Caco-2 (cell line): ENCODE measurements at regions of chr3 and their contacts with region 1.

Region 1: DNA sequence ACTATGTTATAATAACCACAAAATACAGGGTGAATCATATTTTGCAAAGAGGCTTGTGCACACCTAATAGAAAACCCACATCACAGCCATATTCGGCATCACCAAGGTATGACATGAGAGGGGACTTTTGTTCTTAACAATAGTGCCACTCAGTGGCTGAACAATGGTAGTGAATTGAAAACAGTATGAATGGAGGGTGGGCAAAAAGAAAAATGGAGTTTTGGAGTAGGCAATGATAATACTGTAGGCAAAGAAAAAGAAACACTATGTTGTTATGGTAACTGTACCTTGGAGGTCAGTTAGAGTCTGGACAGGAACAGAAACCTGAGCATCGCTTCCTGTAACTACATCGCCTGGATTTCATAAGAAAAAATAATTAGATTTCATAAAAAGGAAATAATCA is 348.6 kb downstream of the PLCL2 start:
- DNase-seq: peak in 1 of 2 experiments; percentile 46
- H3K4me3 ChIP-seq: no peak overlapping the region
- H3K4me3 Mint-ChIP-seq: no peak overlapping the region
- H3K27ac Mint-ChIP-seq: no peak overlapping the region
- H3K4me1 ChIP-seq: peaks cover 6% of the 10 kb centered on the region
- H3K4me1 Mint-ChIP-seq: no peaks in the 10 kb centered on the region
- H3K27me3 ChIP-seq: no peaks in the 10 kb centered on the region
- H3K27me3 Mint-ChIP-seq: no peaks in the 10 kb centered on the region
- CTCF ChIP-seq: peak; percentile 59 to 60

Region 2: GRCh38 chr3:16600780-16601539 is 632.4 kb before region 1 on chr3:
- CTCF ChIA-PET with region 1: no interaction called
- POLR2A ChIA-PET with region 1: no interaction called
- intact Hi-C with region 1: loop called (anchors 1 kb)
- DNase-seq: peak; percentile 46 to 57
- H3K4me3 ChIP-seq: no peak overlapping the region
- H3K4me3 Mint-ChIP-seq: no peak overlapping the region
- H3K27ac Mint-ChIP-seq: no peak overlapping the region
- H3K4me1 ChIP-seq: no peaks in the 10 kb centered on the region
- H3K4me1 Mint-ChIP-seq: no peaks in the 10 kb centered on the region
- H3K27me3 ChIP-seq: no peaks in the 10 kb centered on the region
- H3K27me3 Mint-ChIP-seq: peaks cover 12% of the 10 kb centered on the region
- CTCF ChIP-seq: peak; percentile 63 to 84

Region 3: DNA sequence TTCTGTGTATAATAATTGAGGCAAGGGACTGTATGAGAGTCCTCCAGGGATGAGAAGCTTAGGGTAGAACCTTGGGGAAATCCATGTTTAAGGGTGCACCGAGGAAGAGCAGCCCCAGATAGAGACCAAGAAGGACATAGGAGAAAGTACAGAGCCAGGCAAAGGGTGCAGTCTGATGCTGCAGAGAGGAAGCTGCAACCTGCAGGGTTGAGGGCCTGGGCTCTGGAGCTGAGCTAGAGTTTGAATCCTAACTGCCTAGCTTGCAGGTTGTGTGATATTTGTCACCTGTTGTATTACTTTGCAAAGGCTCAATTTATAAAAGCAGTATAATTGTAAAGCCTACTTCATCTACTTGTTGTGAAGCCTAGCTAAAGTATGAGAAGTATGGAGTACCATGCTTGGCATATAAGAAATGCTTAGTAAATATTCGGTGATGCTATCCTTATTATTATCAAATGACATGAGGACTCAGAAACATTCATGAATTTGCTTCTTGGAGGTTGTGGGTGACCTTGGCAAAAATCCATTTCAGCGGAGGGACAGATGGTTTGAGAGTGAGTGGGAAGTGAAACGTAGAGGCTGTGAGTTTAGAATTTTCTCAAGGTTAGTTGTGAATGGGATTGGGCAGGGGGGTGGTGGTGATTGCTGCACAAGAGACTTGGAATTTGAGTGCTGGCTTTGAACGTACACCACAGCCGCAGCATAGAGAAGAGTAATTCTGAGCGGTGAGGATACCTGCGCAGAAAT is 304.8 kb before region 1 on chr3:
- CTCF ChIA-PET with region 1: no interaction called
- POLR2A ChIA-PET with region 1: no interaction called
- intact Hi-C with region 1: loop called (anchors 10 kb)
- DNase-seq: no peak
- H3K4me3 ChIP-seq: no peak overlapping the region
- H3K4me3 Mint-ChIP-seq: no peak overlapping the region
- H3K27ac Mint-ChIP-seq: no peak overlapping the region
- H3K4me1 ChIP-seq: no peaks in the 10 kb centered on the region
- H3K4me1 Mint-ChIP-seq: no peaks in the 10 kb centered on the region
- H3K27me3 ChIP-seq: no peaks in the 10 kb centered on the region; the same call in 1 of the 2 replicates
- H3K27me3 Mint-ChIP-seq: peaks cover 6% of the 10 kb centered on the region
- CTCF ChIP-seq: no peak

Region 4: GRCh38 chr3:17032407-17033034 is 200.9 kb before region 1 on chr3:
- CTCF ChIA-PET with region 1: no interaction called
- POLR2A ChIA-PET with region 1: no interaction called
- intact Hi-C with region 1: loop called (anchors 5 kb)
- DNase-seq: peak in 1 of 2 experiments; percentile 31
- H3K4me3 ChIP-seq: no peak overlapping the region
- H3K4me3 Mint-ChIP-seq: no peak overlapping the region
- H3K27ac Mint-ChIP-seq: no peak overlapping the region
- H3K4me1 ChIP-seq: no peaks in the 10 kb centered on the region
- H3K4me1 Mint-ChIP-seq: no peaks in the 10 kb centered on the region
- H3K27me3 ChIP-seq: no peaks in the 10 kb centered on the region
- H3K27me3 Mint-ChIP-seq: peaks cover 14% of the 10 kb centered on the region
- CTCF ChIP-seq: peak; percentile 46 to 77

Region 5: DNA sequence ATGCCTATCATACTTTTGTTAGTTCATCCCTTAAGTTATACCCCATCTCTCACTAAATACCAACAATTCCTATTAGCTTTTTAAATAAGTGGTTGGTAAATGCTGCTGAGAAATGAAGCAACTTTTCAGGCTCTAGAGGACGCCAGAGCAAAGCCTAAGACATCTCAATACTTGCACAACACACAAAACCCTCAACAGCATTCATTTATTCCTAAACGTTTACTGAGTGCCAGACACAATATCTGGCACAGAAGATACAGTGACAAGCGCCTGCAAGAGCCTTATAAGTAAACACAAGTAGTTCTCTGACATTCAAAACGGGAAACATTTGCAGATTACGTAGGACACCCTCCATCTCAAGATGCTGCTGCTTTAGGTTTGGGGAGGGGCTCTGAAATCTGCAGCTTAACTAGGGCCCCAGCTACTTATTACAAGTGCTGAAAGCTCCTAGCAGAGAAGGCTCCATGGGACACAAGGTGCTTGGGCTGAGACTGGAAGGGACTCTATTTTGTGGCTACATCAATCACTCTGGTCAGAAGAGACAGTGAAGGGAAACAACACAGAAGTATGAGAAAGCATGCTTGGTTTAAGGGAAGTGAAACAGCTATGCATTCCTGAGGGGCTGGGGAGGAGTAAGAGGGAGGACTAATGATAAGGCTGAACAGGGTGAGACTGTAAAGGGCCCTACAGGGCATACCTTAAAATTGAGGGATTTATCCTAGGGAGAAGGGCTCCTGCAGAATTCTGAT is 37.4 kb before region 1 on chr3:
- CTCF ChIA-PET with region 1: no interaction called
- POLR2A ChIA-PET with region 1: no interaction called
- intact Hi-C with region 1: loop called (anchors 1 kb)
- DNase-seq: no peak
- H3K4me3 ChIP-seq: no peak overlapping the region
- H3K4me3 Mint-ChIP-seq: no peak overlapping the region
- H3K27ac Mint-ChIP-seq: no peak overlapping the region
- H3K4me1 ChIP-seq: no peaks in the 10 kb centered on the region
- H3K4me1 Mint-ChIP-seq: no peaks in the 10 kb centered on the region
- H3K27me3 ChIP-seq: no peaks in the 10 kb centered on the region
- H3K27me3 Mint-ChIP-seq: no peaks in the 10 kb centered on the region
- CTCF ChIP-seq: no peak

Region 6: DNA sequence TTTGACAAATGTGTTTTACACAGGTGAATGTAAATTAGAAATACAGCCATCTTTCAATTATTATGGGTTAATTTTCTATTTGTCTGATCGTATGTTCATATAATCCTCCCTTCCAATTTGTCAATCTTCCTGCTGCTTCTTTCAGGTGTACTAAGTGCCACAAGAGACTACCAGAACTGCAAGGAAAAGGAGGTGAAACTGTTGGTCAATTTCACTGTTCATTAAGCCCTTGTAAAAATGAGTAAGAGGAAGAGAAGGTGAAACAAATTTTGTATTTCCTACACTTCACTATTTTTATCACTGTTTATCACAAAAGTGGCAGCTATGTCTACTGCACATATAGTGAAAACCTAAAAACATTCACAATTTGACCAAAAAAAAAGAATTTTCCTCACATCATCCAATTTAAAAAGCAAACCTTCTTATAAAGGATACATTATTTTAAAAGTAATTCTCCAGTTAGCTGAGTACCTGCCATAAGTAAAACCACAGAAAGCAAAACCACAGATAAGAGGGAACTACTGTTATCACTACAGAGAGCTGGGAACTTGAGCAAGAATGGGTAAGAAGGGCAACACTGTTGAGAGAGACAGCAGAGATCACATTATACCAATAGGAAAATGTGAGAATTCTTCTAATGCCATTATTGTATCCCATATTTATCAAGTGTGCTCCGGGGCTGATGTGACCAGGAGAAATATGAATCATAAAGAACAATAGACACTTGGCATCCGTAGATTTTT is 346.1 kb after region 1 on chr3:
- CTCF ChIA-PET with region 1: no interaction called
- POLR2A ChIA-PET with region 1: no interaction called
- intact Hi-C with region 1: no loop called
- DNase-seq: no peak
- H3K4me3 ChIP-seq: no peak overlapping the region
- H3K4me3 Mint-ChIP-seq: no peak overlapping the region
- H3K27ac Mint-ChIP-seq: no peak overlapping the region
- H3K4me1 ChIP-seq: no peaks in the 10 kb centered on the region; the same call in 1 of the 2 replicates
- H3K4me1 Mint-ChIP-seq: no peaks in the 10 kb centered on the region
- H3K27me3 ChIP-seq: no peaks in the 10 kb centered on the region
- H3K27me3 Mint-ChIP-seq: no peaks in the 10 kb centered on the region
- CTCF ChIP-seq: no peak